ENCODE measurements at regions of chr18 and their contacts with region 1.

Region 1: DNA sequence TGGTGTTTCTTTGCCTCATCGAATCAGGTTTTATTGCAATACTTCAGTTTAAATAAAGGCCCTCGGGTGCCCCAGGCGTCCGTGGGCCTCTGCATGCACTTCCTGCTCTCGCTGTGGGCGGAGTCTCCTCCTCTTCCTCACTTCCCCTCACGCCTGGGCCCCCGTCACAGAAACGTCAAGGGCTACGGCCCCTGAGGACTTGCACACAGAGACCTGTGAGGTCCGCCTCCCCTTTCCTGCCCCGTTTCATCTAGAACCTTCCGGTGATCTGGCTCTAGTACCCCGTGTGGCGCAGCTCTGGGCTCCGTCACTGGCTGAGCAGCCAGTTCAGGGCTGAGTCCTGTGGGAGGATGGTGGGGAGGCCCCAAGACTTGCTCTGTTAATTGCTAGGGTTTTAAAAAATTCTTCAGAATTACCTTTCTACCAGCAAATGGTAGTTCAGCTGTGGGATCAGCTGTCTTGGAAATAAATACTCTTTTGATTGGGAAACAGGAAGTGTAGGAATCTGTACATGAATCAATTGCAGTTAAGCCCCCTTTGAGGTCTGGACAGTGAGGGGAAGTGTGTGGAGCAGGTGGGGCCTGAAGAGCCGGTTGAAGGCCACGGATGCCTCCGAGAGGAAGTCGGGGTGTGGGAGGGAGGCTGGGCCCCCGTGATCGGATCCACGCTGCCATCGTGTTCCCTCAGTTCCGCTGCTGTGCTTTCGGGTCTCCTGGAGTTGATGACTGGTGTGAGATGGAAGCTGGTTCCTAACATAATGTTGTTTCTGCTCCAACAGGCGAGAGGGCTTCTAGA is 10.2 kb downstream of the NFATC1 start:
- DNase-seq: peak; percentile 68 to 97 (median 92)
- ATAC-seq: peak; percentile 91
- H3K4me3 ChIP-seq: peak overlapping the region; percentile 45
- H3K4me3 Mint-ChIP-seq: peak overlapping the region; percentile 89 to 98 (median 92)
- H3K27ac ChIP-seq: peak overlapping the region; percentile 92
- H3K27ac Mint-ChIP-seq: peak overlapping the region; percentile 96 to 100 (median 99)
- H3K4me1 ChIP-seq: peaks cover 34 to 54% of the 10 kb centered on the region in 2 donors
- H3K4me1 Mint-ChIP-seq: peaks cover 42 to 70% (median 54%) of the 10 kb centered on the region in 7 donors
- H3K27me3 ChIP-seq: no peaks in the 10 kb centered on the region
- H3K27me3 Mint-ChIP-seq: no peaks in the 10 kb centered on the region

Region 2: GRCh38 chr18:79068937-79069791 is 336.8 kb before region 1 on chr18 and contains the start of gene ATP9B:
- CTCF ChIA-PET with region 1: no interaction called
- POLR2A ChIA-PET with region 1: no interaction called
- intact Hi-C with region 1: loop called (anchors 2 kb)
- DNase-seq: peak; percentile 97 to 100 (median 99)
- ATAC-seq: peak; percentile 91
- H3K4me3 ChIP-seq: peak within 1 kb of the TSS; percentile 59
- H3K4me3 Mint-ChIP-seq: peak within 1 kb of the TSS; percentile 85 to 98 (median 94)
- H3K27ac ChIP-seq: peak within 1 kb of the TSS; percentile 98
- H3K27ac Mint-ChIP-seq: peak within 1 kb of the TSS; percentile 98 to 100 (median 99)
- H3K4me1 ChIP-seq: peaks cover 12 to 29% of the 10 kb centered on the region in 2 donors
- H3K4me1 Mint-ChIP-seq: peaks cover 28 to 63% (median 51%) of the 10 kb centered on the region in 7 donors
- H3K27me3 ChIP-seq: no peaks in the 10 kb centered on the region
- H3K27me3 Mint-ChIP-seq: peaks cover under 1 to 21% (median 5%) of the 10 kb centered on the region in 5 donors
- total RNA-seq, gene ATP9B: 36.1 to 90.5 (median 90.0) TPM

Region 3: DNA sequence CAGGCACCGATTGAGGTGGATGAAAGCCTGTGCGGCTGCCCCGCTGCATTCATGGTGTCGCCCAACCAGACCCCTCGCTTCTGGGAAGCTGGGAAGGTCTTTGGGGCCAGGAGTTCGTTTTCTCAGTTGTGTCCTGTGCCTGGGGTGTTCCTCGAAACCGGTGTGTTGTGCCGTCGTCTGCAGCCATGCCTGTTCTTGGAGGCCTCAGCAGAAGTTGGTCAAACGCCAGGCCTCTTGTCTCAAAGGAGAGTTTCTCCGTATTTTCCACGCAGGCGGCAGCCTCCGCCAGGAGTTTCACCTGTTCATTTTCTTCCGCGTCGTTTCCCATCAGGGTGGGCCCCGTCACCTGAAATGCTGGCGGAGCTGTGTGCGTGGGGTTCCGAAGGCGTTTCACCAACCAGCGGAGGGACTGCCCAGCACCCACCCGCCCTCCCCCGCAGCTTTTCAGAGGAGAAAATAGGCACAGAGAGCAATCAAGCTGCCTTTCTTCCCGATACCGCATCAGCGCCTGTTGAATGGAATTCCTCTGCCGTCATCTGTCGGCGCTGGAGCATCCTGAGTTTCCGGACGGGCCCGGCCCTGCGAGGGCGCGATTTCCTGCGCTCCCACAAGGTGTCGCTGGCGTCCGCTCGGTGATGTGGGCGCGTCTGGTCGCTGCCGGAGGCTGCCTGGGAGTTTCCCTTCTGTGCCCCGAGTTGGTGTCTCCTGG is 27.3 kb before region 1 on chr18:
- CTCF ChIA-PET with region 1: interaction called, 15 read pairs
- POLR2A ChIA-PET with region 1: interaction called, 3 read pairs
- intact Hi-C with region 1: no loop called
- DNase-seq: peak; percentile 67 to 87 (median 78)
- ATAC-seq: peak; percentile 95
- H3K4me3 ChIP-seq: no peak overlapping the region
- H3K4me3 Mint-ChIP-seq: peak overlapping the region in 2 of 10 donors; percentile 11 to 50
- H3K27ac ChIP-seq: no peak overlapping the region
- H3K27ac Mint-ChIP-seq: peak overlapping the region in 7 of 9 donors; percentile 18 to 77 (median 63)
- H3K4me1 ChIP-seq: peaks cover 6 to 7% of the 10 kb centered on the region in 2 donors
- H3K4me1 Mint-ChIP-seq: peaks cover 4 to 9% (median 9%) of the 10 kb centered on the region in 7 donors
- H3K27me3 ChIP-seq: no peaks in the 10 kb centered on the region
- H3K27me3 Mint-ChIP-seq: no peaks in the 10 kb centered on the region

Region 4: GRCh38 chr18:79393635-79394533 is 12.1 kb before region 1 on chr18:
- CTCF ChIA-PET with region 1: no interaction called
- POLR2A ChIA-PET with region 1: interaction called, 14 read pairs
- intact Hi-C with region 1: loop called (anchors 1 kb)
- DNase-seq: peak in 6 of 9 donors; percentile 47 to 67 (median 54)
- ATAC-seq: peak; percentile 45
- H3K4me3 ChIP-seq: peak overlapping the region; percentile 59
- H3K4me3 Mint-ChIP-seq: peak overlapping the region; percentile 81 to 94 (median 91)
- H3K27ac ChIP-seq: peak overlapping the region; percentile 63
- H3K27ac Mint-ChIP-seq: peak overlapping the region; percentile 67 to 91 (median 85)
- H3K4me1 ChIP-seq: peaks cover 14 to 20% of the 10 kb centered on the region in 2 donors
- H3K4me1 Mint-ChIP-seq: peaks cover 15 to 61% (median 48%) of the 10 kb centered on the region in 7 donors
- H3K27me3 ChIP-seq: peaks cover 0 to 6% of the 10 kb centered on the region in 2 donors
- H3K27me3 Mint-ChIP-seq: peaks cover 0 to 39% (median 0%) of the 10 kb centered on the region in 5 donors

Region 5: GRCh38 chr18:79439201-79440023 is 33.4 kb after region 1 on chr18:
- CTCF ChIA-PET with region 1: no interaction called
- POLR2A ChIA-PET with region 1: interaction called, 3 read pairs
- intact Hi-C with region 1: loop called in 1 of 2 experiments (anchors 1 kb)
- DNase-seq: peak in 8 of 9 donors; percentile 37 to 67 (median 58)
- ATAC-seq: peak; percentile 49
- H3K4me3 ChIP-seq: no peak overlapping the region
- H3K4me3 Mint-ChIP-seq: peak overlapping the region in 7 of 10 donors; percentile 31 to 67 (median 54)
- H3K27ac ChIP-seq: no peak overlapping the region
- H3K27ac Mint-ChIP-seq: peak overlapping the region in 8 of 9 donors; percentile 41 to 96 (median 88)
- H3K4me1 ChIP-seq: peaks cover 0 to 21% of the 10 kb centered on the region in 2 donors
- H3K4me1 Mint-ChIP-seq: peaks cover 14 to 56% (median 41%) of the 10 kb centered on the region in 7 donors
- H3K27me3 ChIP-seq: no peaks in the 10 kb centered on the region
- H3K27me3 Mint-ChIP-seq: no peaks in the 10 kb centered on the region

Region 6: GRCh38 chr18:79507076-79507545 is 101.1 kb after region 1 on chr18:
- CTCF ChIA-PET with region 1: interaction called, 6 read pairs
- POLR2A ChIA-PET with region 1: interaction called, 11 read pairs
- intact Hi-C with region 1: no loop called
- DNase-seq: peak in 7 of 9 donors; percentile 22 to 51 (median 47)
- ATAC-seq: peak; percentile 63
- H3K4me3 ChIP-seq: peak overlapping the region; percentile 53
- H3K4me3 Mint-ChIP-seq: peak overlapping the region; percentile 74 to 86 (median 80)
- H3K27ac ChIP-seq: peak overlapping the region; percentile 69
- H3K27ac Mint-ChIP-seq: peak overlapping the region; percentile 83 to 97 (median 95)
- H3K4me1 ChIP-seq: peaks cover 7 to 42% of the 10 kb centered on the region in 2 donors
- H3K4me1 Mint-ChIP-seq: peaks cover 42 to 72% (median 58%) of the 10 kb centered on the region in 7 donors
- H3K27me3 ChIP-seq: no peaks in the 10 kb centered on the region
- H3K27me3 Mint-ChIP-seq: no peaks in the 10 kb centered on the region

Region 7: DNA sequence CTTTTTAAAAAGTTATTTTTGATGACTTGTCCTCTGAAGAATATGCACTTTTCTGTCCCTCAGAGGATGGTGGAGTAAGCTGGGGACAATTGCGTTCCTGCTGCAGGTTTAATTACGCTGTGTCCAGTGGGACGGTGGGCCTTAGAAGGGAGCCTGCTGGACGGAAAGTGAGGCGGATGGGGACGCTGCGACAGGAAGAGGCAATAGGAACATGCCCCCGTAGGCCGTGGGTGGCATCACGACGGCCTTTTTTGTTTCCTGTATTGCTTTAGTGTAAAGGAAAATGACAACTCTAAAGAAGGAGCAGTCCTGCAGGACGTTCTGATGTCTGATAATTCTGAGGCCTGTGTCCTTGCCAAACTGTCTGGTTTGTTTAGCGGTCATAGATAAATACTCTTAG is 111.4 kb after region 1 on chr18:
- CTCF ChIA-PET with region 1: interaction called, 10 read pairs
- POLR2A ChIA-PET with region 1: interaction called, 62 read pairs
- intact Hi-C with region 1: loop called in 1 of 2 experiments (anchors 2 kb)
- DNase-seq: peak in 6 of 9 donors; percentile 26 to 60 (median 36)
- ATAC-seq: no peak
- H3K4me3 ChIP-seq: no peak overlapping the region
- H3K4me3 Mint-ChIP-seq: peak overlapping the region; percentile 70 to 89 (median 78)
- H3K27ac ChIP-seq: peak overlapping the region; percentile 75
- H3K27ac Mint-ChIP-seq: peak overlapping the region; percentile 86 to 100 (median 98)
- H3K4me1 ChIP-seq: peaks cover 27 to 66% of the 10 kb centered on the region in 2 donors
- H3K4me1 Mint-ChIP-seq: peaks cover 34 to 77% (median 66%) of the 10 kb centered on the region in 7 donors
- H3K27me3 ChIP-seq: no peaks in the 10 kb centered on the region
- H3K27me3 Mint-ChIP-seq: no peaks in the 10 kb centered on the region